HCT116 (cell line): ENCODE measurements at regions of chr19 and their contacts with region 1.

Region 1: DNA sequence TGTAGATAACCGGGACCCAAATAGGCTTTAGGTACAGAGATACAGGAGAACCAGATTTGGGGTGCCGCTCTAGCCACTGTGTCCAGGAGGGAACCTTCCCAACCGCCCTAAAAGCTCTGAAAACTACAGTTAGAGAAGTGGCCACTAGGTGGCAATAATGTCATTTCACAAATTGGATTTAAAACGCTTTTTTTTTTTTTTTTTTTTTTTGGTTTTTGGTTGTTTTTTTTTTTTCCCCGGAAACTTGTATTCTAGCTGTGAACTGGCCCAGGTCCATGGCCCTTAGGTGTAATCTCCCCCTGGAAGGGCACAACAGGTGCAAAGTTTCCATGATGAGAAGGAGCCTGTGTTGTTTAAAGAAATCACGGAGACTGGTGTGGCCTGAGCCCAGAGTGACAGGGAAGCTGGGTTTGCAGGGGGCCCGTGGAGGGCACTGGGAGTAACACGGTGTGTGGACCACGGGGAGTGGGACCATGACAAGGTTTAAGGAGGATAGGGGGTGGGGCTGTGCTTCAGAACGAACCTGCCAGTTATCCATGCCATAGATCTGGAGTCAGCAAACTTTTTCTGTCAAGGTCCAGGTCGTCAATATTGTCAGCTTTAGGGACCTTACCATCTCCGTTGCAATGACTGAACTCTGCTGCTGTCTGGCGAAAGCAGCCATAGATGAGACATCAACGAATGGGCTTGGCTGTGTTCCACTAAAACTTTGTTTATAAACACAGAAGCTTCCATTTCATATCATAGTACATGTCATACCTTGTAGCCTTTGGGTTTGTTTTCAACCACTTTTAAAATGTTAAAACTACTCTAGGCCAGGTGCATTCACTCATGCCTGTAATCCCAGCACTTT is 10.1 kb downstream of the OR1I1 start:
- DNase-seq: peak; percentile 66
- ATAC-seq: peak; percentile 78
- H3K4me3 ChIP-seq: no peak overlapping the region
- H3K27ac ChIP-seq: no peak overlapping the region
- H3K4me1 ChIP-seq: peaks cover 0 to 4% of the 10 kb centered on the region in 2 experiments; a peak in 1 of 4 replicates
- H3K27me3 ChIP-seq: peaks cover 14% of the 10 kb centered on the region; the same call in 1 of the 2 replicates
- CTCF ChIP-seq: peak; percentile 56 to 83 (median 79)
- POLR2A ChIP-seq: no peak
- RAD21 ChIP-seq: peak; percentile 80

Region 2: DNA sequence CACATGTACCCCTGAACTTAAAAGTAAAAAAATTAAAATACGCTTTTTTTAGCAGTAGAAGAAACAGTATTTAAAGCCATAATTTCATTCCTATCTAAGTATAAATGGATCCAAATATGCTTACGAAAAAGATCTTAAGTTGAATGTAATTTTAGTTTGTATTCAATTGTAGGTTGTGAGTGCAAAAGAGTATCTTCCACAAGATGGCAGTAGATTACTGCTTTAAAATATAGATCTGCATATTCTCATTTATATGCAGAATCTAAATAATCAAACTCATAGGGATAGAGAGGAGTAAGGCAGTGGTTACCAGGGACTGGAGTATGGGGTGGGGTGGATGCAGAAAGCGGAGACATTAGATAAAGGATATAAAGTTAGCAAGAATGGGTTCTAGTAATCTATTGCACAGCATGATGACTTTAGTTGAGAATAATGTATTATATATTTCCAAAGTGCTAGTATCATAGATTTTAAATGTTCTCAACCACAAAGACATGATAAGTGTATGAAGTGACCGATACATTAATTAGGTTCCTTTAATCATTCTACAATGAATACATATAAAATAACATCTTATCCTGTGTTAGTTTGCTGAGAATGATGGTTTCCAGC is 220.4 kb before region 1 on chr19:
- CTCF ChIA-PET with region 1: no interaction called
- POLR2A ChIA-PET with region 1: no interaction called
- RAD21 ChIA-PET with region 1: no interaction called
- intact Hi-C with region 1: loop called (anchors 5 kb)
- DNase-seq: peak; percentile 22
- ATAC-seq: peak; percentile 62
- H3K4me3 ChIP-seq: no peak overlapping the region
- H3K27ac ChIP-seq: no peak overlapping the region
- H3K4me1 ChIP-seq: no peaks in the 10 kb centered on the region
- H3K27me3 ChIP-seq: peaks cover 45% of the 10 kb centered on the region
- CTCF ChIP-seq: peak; percentile 46 to 80 (median 59); a peak in 5 of 6 replicates
- POLR2A ChIP-seq: no peak
- RAD21 ChIP-seq: peak; percentile 73

Region 3: DNA sequence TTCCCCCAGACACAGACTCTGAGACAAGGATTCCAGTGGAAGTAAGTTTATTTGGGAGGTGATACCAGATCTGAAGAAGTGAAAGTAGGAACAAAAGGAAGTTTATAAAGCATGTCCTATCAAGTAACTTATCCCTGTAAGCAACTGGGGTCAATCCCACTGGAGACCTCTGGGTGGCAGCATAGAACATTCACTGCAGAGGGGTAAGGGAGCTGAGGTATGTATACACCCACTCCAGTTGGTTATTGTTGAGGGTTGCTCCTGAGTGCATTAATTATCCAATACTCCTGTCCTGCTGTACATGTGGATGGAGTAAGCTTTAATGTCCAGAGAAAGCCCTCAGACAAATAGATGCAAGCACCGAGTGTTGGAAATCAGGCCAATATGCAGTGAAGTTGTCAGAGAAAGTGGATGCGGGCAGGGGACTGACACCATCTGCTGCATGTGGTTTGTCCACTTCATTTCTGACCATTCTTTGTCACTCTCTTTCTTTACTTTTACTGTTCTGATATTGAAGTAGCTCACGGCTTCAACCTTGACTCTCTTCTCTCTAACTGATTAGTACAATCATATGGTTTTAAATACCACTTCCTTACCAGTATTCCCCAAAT is 62.0 kb after region 1 on chr19:
- CTCF ChIA-PET with region 1: interaction called, 8 read pairs
- POLR2A ChIA-PET with region 1: interaction called, 5 read pairs
- RAD21 ChIA-PET with region 1: interaction called, 3 to 6 read pairs
- intact Hi-C with region 1: loop called (anchors 1 kb)
- DNase-seq: peak; percentile 37
- ATAC-seq: peak; percentile 66
- H3K4me3 ChIP-seq: no peak overlapping the region
- H3K27ac ChIP-seq: no peak overlapping the region
- H3K4me1 ChIP-seq: no peaks in the 10 kb centered on the region
- H3K27me3 ChIP-seq: no peaks in the 10 kb centered on the region
- CTCF ChIP-seq: peak; percentile 49 to 74 (median 71); a peak in 5 of 6 replicates
- POLR2A ChIP-seq: no peak
- RAD21 ChIP-seq: peak; percentile 69

Region 4: DNA sequence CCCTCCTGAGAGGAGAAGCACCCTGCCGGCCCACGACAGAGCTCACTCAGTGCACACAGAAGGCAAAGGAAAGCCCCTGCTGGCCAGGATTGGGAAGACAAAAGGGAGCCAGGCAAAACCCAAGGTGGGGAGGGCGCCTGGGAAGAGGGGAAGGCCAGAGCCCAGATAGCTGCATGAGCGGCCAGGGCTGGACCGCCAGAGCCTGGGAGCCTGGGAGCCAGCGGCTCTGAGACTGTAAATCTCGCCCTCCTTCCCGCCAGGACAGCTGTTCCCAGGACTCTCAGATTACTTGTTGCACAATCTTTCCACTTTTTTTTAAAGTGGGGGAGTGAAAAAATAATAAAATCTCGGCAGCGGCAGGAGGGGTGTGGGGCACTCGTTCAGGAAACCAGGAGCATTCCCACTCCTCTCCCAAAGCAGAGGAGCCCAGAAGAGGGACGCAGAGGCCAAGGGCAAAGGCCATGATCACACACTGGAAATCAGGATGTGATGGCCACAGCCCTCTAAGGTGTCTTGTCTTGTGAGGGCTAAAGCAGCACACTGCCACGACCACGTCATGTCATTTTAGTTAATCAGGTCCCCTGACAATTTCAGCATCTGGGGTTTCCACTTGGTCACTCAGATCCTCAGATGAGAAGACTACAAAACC is 159.7 kb after region 1 on chr19:
- CTCF ChIA-PET with region 1: interaction called, 14 read pairs
- POLR2A ChIA-PET with region 1: no interaction called
- RAD21 ChIA-PET with region 1: interaction called in 1 of 2 experiments, 4 read pairs
- intact Hi-C with region 1: no loop called
- DNase-seq: no peak
- ATAC-seq: peak; percentile 81
- H3K4me3 ChIP-seq: no peak overlapping the region
- H3K27ac ChIP-seq: no peak overlapping the region
- H3K4me1 ChIP-seq: peaks cover 14 to 28% of the 10 kb centered on the region in 2 experiments
- H3K27me3 ChIP-seq: no peaks in the 10 kb centered on the region
- CTCF ChIP-seq: peak; percentile 26 to 49 (median 48); a peak in 5 of 6 replicates
- POLR2A ChIP-seq: no peak
- RAD21 ChIP-seq: peak; percentile 53